Sciatic nerve (tissue), 2 donors: ENCODE measurements at regions of chr12 and their contacts with region 1.

Region 1: GRCh38 chr12:42129595-42130204 is 15.0 kb downstream of the GXYLT1 start:
- DNase-seq: no peak
- ATAC-seq: peak; percentile 88

Region 2: DNA sequence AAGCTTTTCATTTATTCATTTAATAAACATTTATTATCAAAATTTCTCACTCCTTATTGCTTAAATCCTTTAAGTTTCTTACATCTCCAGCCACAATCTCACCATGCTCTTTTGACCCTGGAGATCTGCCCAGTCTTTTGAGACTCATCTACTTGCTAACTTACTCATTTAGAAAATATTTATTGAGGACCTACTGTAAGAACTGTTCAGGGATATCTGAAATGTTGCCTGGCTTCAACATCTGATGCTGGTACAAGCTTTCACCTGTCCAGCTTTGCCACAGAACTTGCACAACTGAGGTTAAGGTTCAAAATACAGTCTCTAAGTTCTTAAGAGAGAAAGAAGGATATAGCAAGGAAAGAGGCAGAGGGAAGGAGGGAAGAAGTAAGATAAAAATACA is 32.5 kb after region 1 on chr12:
- intact Hi-C with region 1: no loop called
- DNase-seq: no peak
- ATAC-seq: no peak

Region 3: DNA sequence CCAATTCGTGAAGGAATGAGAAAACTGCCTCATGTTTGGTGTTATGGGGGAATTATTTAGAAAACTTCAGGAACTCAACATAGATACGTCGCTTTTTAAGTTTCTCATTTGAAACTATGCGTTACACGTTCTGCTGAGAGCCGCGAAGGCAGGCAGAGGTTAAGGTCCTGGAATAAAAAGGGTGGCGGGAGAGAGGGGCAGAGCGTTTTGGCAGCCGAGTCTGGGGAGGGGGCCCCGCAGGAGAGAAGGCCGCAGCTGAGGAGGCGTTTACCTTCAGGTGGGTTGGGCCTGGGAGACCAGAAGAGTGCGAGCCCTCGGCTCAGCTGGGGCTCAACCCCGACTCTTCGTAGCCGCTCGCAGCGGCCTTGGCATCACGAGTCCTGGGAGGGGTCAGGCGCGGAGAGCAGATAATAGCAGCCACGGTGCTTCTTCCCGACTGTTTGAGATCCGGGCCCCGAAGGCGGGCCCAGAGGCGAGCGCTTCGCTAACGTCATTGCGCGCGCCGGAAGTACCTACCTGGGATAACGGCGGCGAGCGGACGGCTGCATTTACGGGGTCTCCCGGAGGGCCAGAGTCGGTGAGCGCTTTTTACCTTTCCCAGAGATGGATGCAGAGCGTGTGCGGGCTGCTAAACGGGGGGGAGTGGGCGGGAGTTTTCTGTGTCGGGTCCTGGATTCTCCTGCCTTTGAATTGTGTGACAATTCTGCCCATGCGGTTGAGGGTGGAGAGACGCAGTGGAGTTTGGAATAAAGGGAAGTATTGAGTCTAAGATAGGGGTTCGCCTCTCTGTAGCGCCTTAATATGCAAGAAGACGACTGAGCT is 196.2 kb after region 1 on chr12 and contains the starts of genes PPHLN1 and ZCRB1:
- intact Hi-C with region 1: loop called (anchors 10 kb)
- DNase-seq: peak; percentile 89
- ATAC-seq: peak; percentile 98
- total RNA-seq, gene PPHLN1: 50.8 TPM
- total RNA-seq, gene ZCRB1: 43.1 TPM